A549 (cell line): ENCODE measurements at regions of chr2 and their contacts with region 1.

Region 1: GRCh38 chr2:102240640-102241370 is 54.0 kb downstream of the IL1RL2 start:
- DNase-seq: peak; percentile 65 to 94
- ATAC-seq: peak; percentile 99
- H3K4me3 ChIP-seq: no peak overlapping the region
- H3K27ac ChIP-seq: peak overlapping the region; percentile 76 to 79
- H3K4me1 ChIP-seq: peaks cover 17% of the 10 kb centered on the region
- CTCF ChIP-seq: peak; percentile 98
- EP300 ChIP-seq: no peak
- POLR2A ChIP-seq: no peak
- RAD21 ChIP-seq: peak; percentile 98 to 100

Region 2: GRCh38 chr2:101883863-101884262 is 356.9 kb before region 1 on chr2:
- CTCF ChIA-PET with region 1: interaction called, 37 read pairs
- POLR2A ChIA-PET with region 1: no interaction called
- DNase-seq: peak; percentile 31 to 51
- ATAC-seq: peak; percentile 50 to 87; a peak in 4 of 6 replicates
- H3K4me3 ChIP-seq: no peak overlapping the region
- H3K27ac ChIP-seq: no peak overlapping the region
- H3K4me1 ChIP-seq: no peaks in the 10 kb centered on the region
- CTCF ChIP-seq: peak; percentile 70
- EP300 ChIP-seq: no peak
- POLR2A ChIP-seq: no peak
- RAD21 ChIP-seq: peak; percentile 66 to 67

Region 3: GRCh38 chr2:102063941-102064678 is 176.7 kb before region 1 on chr2:
- CTCF ChIA-PET with region 1: interaction called, 10 read pairs
- POLR2A ChIA-PET with region 1: interaction called, 8 read pairs
- DNase-seq: peak; percentile 88 to 92
- ATAC-seq: peak; percentile 81 to 86
- H3K4me3 ChIP-seq: peak overlapping the region; percentile 30; the same call in 1 of the 3 replicates
- H3K27ac ChIP-seq: peak overlapping the region; percentile 98 to 99
- H3K4me1 ChIP-seq: peaks cover 55% of the 10 kb centered on the region
- CTCF ChIP-seq: no peak
- EP300 ChIP-seq: peak in 1 of 2 experiments; percentile 55; a peak in 2 of 5 replicates
- POLR2A ChIP-seq: no peak
- RAD21 ChIP-seq: peak; percentile 8 to 30; a peak in 1 of 5 replicates

Region 4: GRCh38 chr2:102091121-102091520 is 149.7 kb before region 1 on chr2:
- CTCF ChIA-PET with region 1: no interaction called
- POLR2A ChIA-PET with region 1: no interaction called
- DNase-seq: no peak
- ATAC-seq: no peak
- H3K4me3 ChIP-seq: no peak overlapping the region
- H3K27ac ChIP-seq: no peak overlapping the region
- H3K4me1 ChIP-seq: peaks cover 19% of the 10 kb centered on the region
- CTCF ChIP-seq: no peak
- EP300 ChIP-seq: no peak
- POLR2A ChIP-seq: no peak
- RAD21 ChIP-seq: no peak

Region 5: GRCh38 chr2:102103992-102104871 is 136.6 kb before region 1 on chr2:
- CTCF ChIA-PET with region 1: interaction called, 18 read pairs
- POLR2A ChIA-PET with region 1: interaction called, 3 read pairs
- DNase-seq: peak in 1 of 2 experiments; percentile 71
- ATAC-seq: peak; percentile 51 to 61
- H3K4me3 ChIP-seq: peak overlapping the region; percentile 41
- H3K27ac ChIP-seq: peak overlapping the region; percentile 96 to 97
- H3K4me1 ChIP-seq: peaks cover 74% of the 10 kb centered on the region
- CTCF ChIP-seq: no peak
- EP300 ChIP-seq: no peak
- POLR2A ChIP-seq: no peak
- RAD21 ChIP-seq: peak in 1 of 2 experiments; percentile 6; a peak in 1 of 5 replicates

Region 6: DNA sequence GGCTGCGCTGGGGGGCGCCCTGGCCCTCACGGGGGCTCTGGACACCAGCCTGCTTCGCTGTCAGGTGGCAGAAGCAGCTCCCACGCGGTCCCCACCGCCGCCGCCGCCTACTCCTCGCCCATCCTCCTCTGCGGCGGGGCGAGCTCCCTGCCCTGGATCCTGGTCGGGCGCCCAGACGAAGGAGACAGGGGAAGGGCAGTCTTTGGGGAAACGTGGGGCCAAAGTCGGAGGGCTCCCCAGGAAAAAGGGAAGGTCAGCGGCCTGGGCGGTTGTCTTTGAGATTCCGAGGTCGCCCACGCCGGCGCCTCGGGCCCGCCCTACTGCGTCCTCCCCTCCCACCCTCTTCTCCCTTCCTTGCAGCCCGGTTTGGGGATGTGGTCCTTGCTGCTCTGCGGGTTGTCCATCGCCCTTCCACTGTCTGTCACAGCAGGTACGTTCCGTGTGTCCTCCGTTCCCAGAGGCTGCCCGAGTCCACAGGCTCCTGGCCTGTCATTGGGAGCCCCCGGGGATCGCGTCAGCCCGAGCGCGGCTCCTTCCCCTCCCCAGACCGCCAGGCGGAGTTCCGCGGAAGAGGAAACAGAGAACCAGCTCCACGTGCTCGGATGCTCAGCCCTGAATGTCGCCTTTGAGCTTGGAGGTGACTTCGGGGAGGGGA is 53.2 kb before region 1 on chr2:
- CTCF ChIA-PET with region 1: interaction called, 14 read pairs
- POLR2A ChIA-PET with region 1: no interaction called
- DNase-seq: no peak
- ATAC-seq: no peak
- H3K4me3 ChIP-seq: no peak overlapping the region
- H3K27ac ChIP-seq: no peak overlapping the region
- H3K4me1 ChIP-seq: peaks cover 15% of the 10 kb centered on the region; the same call in 2 of the 3 replicates
- CTCF ChIP-seq: no peak
- EP300 ChIP-seq: no peak
- POLR2A ChIP-seq: no peak
- RAD21 ChIP-seq: no peak

Region 7: GRCh38 chr2:102258386-102259074 is 17.7 kb after region 1 on chr2:
- CTCF ChIA-PET with region 1: interaction called, 37 read pairs
- POLR2A ChIA-PET with region 1: no interaction called
- DNase-seq: peak; percentile 21 to 40
- ATAC-seq: peak; percentile 74 to 92; a peak in 5 of 6 replicates
- H3K4me3 ChIP-seq: no peak overlapping the region
- H3K27ac ChIP-seq: peak overlapping the region; percentile 52 to 54; a peak in 5 of 6 replicates
- H3K4me1 ChIP-seq: peaks cover 3% of the 10 kb centered on the region; the same call in 1 of the 3 replicates
- CTCF ChIP-seq: no peak
- EP300 ChIP-seq: no peak
- POLR2A ChIP-seq: no peak
- RAD21 ChIP-seq: no peak

Region 8: DNA sequence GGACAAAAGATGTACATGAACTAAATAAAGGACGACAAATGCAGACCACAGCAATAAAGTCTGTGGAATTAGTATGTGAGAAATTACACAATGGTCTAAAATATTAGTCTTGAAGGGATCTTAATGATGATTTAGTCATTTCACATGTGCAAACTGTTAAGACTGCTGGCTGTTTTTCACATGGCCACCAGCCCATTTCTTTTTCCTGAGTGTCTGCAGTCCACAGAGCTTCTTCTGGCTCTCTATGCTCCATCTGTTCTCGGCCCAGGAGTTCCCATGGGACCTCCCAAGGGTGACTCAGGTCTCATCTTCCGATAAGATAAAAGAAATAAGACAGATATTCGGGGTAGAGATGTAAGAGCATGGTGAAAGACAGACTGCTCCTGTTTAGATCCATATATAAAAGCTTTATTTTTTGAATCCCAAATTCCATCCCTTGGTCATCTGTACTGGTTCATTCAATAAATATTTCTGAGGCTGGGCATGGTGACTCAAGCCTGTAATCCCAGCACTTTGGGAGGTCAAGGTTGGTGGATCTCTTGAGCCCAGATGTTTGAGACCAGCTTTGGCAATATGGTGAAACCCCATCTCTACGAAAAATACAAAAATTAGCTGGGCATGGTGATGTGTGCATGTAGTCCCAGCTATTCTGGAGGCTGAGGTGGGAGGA is 90.6 kb after region 1 on chr2:
- CTCF ChIA-PET with region 1: no interaction called
- POLR2A ChIA-PET with region 1: no interaction called
- DNase-seq: no peak
- ATAC-seq: no peak
- H3K4me3 ChIP-seq: no peak overlapping the region
- H3K27ac ChIP-seq: no peak overlapping the region
- H3K4me1 ChIP-seq: peaks cover 6% of the 10 kb centered on the region; the same call in 2 of the 3 replicates
- CTCF ChIP-seq: no peak
- EP300 ChIP-seq: no peak
- POLR2A ChIP-seq: no peak
- RAD21 ChIP-seq: no peak

Region 9: DNA sequence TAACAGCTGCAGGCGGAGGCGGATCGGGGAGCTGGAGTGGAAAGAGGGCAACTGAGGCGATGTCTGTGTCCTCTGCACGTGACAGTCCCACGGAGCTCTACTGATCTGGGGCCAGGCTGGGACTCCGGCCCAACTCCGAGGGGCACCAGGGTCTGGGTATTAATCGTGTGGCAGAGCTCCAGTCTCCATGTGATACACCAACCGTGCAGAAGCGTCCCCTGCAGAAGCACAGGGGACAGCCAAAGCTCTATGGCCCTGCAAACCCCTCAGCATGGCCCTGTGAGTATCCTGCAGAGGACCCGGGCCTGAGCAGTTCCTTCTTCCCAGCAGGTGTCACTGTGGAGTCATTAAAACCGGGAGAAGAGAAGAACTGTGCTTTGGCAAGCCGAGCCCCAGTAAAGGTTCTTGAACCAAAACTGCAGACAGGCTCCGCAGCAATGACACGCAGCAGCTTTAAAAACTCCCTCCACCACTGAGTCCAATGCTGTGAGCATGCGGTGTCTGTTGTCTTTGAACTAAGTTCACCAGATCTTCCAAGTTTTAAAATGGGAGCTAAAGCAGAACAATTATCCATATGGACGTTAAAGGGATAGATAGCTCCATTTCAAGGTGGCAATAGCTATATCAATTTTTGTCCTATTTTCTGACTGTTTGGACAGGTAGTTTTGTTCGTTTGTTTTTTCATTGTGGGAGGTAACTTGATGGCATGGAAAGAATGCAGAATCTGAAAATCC is 600.5 kb after region 1 on chr2:
- CTCF ChIA-PET with region 1: no interaction called
- POLR2A ChIA-PET with region 1: no interaction called
- DNase-seq: peak; percentile 23 to 55
- ATAC-seq: peak; percentile 91 to 98
- H3K4me3 ChIP-seq: no peak overlapping the region
- H3K27ac ChIP-seq: no peak overlapping the region
- H3K4me1 ChIP-seq: no peaks in the 10 kb centered on the region
- CTCF ChIP-seq: peak; percentile 52
- EP300 ChIP-seq: no peak
- POLR2A ChIP-seq: no peak
- RAD21 ChIP-seq: peak; percentile 46 to 54; a peak in 4 of 5 replicates